A549 (cell line): ENCODE measurements at regions of chr12 and their contacts with region 1.

Region 1: GRCh38 chr12:55996715-55997534 is at the start of gene SUOX:
- DNase-seq: peak; percentile 96 to 100
- ATAC-seq: peak; percentile 99 to 100
- H3K4me3 ChIP-seq: peak within 1 kb of the TSS; percentile 67
- H3K27ac ChIP-seq: peak within 1 kb of the TSS; percentile 77 to 89
- H3K4me1 ChIP-seq: peaks cover 17% of the 10 kb centered on the region
- CTCF ChIP-seq: no peak
- EP300 ChIP-seq: no peak
- POLR2A ChIP-seq: peak; percentile 55
- RAD21 ChIP-seq: no peak
- polyA plus RNA-seq, gene SUOX: 15.6 and 22.2 TPM in 2 replicates

Region 2: DNA sequence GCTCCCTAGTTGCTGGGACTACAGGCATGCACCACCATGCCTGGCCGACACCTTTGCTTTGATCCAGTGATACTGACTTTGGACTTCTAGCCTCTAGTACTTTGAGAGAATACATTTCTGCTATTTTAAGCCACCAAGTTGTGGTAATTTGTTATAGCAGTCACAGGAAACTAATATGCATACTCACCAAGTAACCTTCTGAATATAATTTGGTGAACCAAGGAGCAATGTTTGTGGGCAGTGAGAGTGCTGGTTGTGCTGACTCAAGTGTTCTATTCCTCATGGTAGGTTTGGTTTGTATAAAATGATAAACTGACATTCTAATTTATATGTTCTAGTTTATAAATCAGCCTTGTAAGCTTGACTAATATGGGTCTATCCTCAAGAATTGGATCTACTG is 111.8 kb before region 1 on chr12:
- CTCF ChIA-PET with region 1: no interaction called
- POLR2A ChIA-PET with region 1: no interaction called
- DNase-seq: no peak
- ATAC-seq: no peak
- H3K4me3 ChIP-seq: no peak overlapping the region
- H3K27ac ChIP-seq: no peak overlapping the region
- H3K4me1 ChIP-seq: no peaks in the 10 kb centered on the region
- CTCF ChIP-seq: no peak
- EP300 ChIP-seq: no peak
- POLR2A ChIP-seq: no peak
- RAD21 ChIP-seq: no peak

Region 3: GRCh38 chr12:55966408-55967281 is 30.3 kb before region 1 on chr12 and contains the start of gene CDK2:
- CTCF ChIA-PET with region 1: interaction called, 14 read pairs
- POLR2A ChIA-PET with region 1: interaction called, 3 read pairs
- DNase-seq: peak; percentile 79 to 92
- ATAC-seq: peak; percentile 94 to 96
- H3K4me3 ChIP-seq: peak within 1 kb of the TSS; percentile 83
- H3K27ac ChIP-seq: peak within 1 kb of the TSS; percentile 76 to 86
- H3K4me1 ChIP-seq: peaks cover 18% of the 10 kb centered on the region; the same call in 2 of the 3 replicates
- CTCF ChIP-seq: no peak
- EP300 ChIP-seq: no peak
- POLR2A ChIP-seq: peak; percentile 44
- RAD21 ChIP-seq: no peak
- polyA plus RNA-seq, gene CDK2: 51.0 and 86.3 TPM in 2 replicates

Region 4: GRCh38 chr12:55982319-55982936 is 14.5 kb before region 1 on chr12:
- CTCF ChIA-PET with region 1: interaction called, 96 read pairs
- POLR2A ChIA-PET with region 1: no interaction called
- DNase-seq: no peak
- ATAC-seq: no peak
- H3K4me3 ChIP-seq: no peak overlapping the region
- H3K27ac ChIP-seq: no peak overlapping the region
- H3K4me1 ChIP-seq: no peaks in the 10 kb centered on the region
- CTCF ChIP-seq: no peak
- EP300 ChIP-seq: no peak
- POLR2A ChIP-seq: no peak
- RAD21 ChIP-seq: no peak

Region 5: GRCh38 chr12:56014206-56014605 is 17.3 kb after region 1 on chr12:
- CTCF ChIA-PET with region 1: interaction called, 33 read pairs
- POLR2A ChIA-PET with region 1: interaction called, 5 read pairs
- DNase-seq: no peak
- ATAC-seq: 0 out of 6 replicates have a peak, but pooled peaks of 1 of the 2 experiments have one; percentile 24
- H3K4me3 ChIP-seq: no peak overlapping the region
- H3K27ac ChIP-seq: no peak overlapping the region
- H3K4me1 ChIP-seq: no peaks in the 10 kb centered on the region
- CTCF ChIP-seq: no peak
- EP300 ChIP-seq: no peak
- POLR2A ChIP-seq: no peak
- RAD21 ChIP-seq: no peak

Region 6: DNA sequence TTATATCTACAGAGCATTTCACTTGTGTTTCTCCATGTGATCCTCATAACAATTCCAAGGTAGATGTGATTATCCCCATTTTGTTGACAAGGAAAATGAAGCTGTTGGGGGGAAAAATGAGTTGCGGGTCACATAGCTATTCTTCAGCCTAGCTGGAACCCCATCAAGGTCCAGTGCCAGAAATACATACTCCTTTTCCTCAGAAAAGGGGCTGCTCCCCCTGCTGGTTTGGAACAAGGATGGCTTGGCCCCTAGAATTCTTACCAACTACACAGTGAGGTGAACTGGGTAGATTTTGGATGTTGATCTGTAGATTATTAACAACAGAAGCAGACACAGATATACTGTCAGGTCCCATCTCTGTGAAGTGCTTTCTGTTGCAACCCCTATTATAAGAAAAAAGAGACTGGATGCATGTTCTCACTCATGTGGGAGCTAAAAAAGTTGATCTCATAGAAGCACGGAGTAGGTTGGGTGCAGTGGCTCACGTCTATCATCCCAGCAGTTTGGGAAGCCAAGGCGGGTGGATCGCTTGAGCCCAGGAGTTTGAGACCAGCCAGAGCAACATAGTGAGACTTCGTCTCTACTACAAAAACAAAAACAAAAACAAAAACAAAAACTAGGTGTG is 32.9 kb after region 1 on chr12:
- CTCF ChIA-PET with region 1: interaction called, 92 read pairs
- POLR2A ChIA-PET with region 1: interaction called, 4 read pairs
- DNase-seq: peak; percentile 67 to 78
- ATAC-seq: peak; percentile 89 to 96
- H3K4me3 ChIP-seq: no peak overlapping the region
- H3K27ac ChIP-seq: no peak overlapping the region
- H3K4me1 ChIP-seq: no peaks in the 10 kb centered on the region
- CTCF ChIP-seq: peak; percentile 82
- EP300 ChIP-seq: no peak
- POLR2A ChIP-seq: no peak
- RAD21 ChIP-seq: peak; percentile 55 to 65; a peak in 4 of 5 replicates